H1 (cell line): ENCODE measurements at regions of chr2 and their contacts with region 1.

Region 1: DNA sequence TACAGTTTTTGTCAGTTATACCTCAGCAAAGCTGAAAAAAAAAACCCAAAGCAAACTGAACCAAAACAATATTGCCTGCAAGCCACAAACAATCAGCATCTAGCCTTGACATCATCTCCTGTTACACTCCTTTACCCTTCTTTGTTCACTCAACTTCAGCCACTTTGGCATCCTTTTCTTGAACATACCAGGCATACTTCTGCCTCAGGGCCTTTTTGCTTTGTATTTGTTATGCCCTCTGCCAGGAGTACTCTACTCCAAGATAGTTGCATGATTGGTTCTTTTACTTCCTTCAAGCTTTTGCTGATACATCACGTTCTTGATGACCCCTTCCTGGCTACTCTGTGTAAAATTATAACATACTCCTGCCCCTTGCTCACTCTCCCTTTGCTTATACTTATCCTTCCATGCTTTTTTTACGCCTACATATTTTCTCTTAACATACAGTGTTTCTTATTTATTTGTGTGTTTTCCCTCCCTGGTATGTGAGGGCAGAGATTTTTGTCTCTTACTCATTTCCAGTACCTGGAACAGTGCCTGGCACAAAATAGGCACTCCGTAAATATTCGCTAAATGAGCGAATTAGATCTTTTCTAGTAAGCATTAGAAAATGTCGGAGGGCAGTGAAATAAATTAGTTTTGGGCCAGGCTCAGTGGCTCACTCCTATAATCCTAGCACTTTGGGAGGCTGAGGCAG is 12.7 kb downstream of the ABI2 start:
- DNase-seq: no peak
- H3K4me3 ChIP-seq: no peak overlapping the region
- H3K27ac ChIP-seq: peak overlapping the region; percentile 76
- H3K4me1 ChIP-seq: peaks cover 2 to 10% (median 3%) of the 10 kb centered on the region in 4 experiments
- H3K27me3 ChIP-seq: no peaks in the 10 kb centered on the region
- CTCF ChIP-seq: no peak
- EP300 ChIP-seq: no peak
- POLR2A ChIP-seq: no peak; a peak in 1 of 3 replicates
- RAD21 ChIP-seq: no peak

Region 2: DNA sequence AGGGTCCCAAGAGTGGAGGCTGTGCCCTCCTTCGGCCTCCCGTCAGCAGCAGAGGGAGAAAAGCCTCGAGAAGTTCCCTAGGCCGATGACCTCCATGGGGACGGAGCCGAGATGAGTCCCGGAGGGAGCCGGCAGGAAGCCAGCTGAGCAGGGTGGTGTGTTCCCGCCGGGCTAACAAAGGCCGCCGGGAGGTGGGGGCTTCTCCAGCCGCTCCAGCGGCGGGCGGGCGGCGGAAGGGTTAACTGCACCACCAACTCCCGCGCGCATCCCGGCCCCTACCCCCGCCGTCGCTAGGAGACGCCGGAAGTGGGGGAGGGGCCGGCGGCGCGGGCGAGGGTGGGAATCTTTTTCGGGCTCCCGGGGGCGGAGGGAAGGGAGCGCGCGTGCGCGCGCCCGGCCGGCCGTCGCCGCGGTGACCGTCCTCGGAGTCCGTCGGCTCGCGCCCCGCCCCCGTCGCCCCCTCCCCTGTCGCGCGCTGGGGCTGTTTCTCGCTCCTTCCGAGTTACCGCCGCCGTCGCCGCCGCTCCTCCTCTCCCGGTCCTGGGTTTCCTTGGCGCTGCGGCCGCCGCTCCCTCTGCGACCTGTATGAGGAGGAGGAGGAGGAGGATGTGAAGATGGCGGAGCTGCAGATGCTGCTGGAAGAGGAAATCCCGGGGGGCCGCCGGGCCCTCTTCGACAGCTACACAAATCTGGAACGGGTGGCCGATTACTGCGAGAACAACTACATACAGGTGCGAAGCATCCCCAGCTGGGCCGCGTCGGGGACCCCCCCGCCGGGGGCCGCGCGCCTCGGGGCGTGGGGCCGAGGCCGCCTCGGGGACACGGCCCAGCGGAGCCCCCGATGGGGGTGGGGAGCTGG is 12.8 kb before region 1 on chr2 and contains the start of gene ABI2:
- CTCF ChIA-PET with region 1: interaction called, 3 read pairs
- POLR2A ChIA-PET with region 1: interaction called, 40 read pairs
- DNase-seq: peak; percentile 81 to 95
- H3K4me3 ChIP-seq: peak within 1 kb of the TSS; percentile 84 to 99 (median 92)
- H3K27ac ChIP-seq: peak within 1 kb of the TSS; percentile 97
- H3K4me1 ChIP-seq: peaks cover 0 to 2% (median 0%) of the 10 kb centered on the region in 4 experiments; a peak in 1 of 7 replicates
- H3K27me3 ChIP-seq: no peaks in the 10 kb centered on the region
- CTCF ChIP-seq: no peak
- EP300 ChIP-seq: peak in 1 of 2 experiments; percentile 56; a peak in 1 of 3 replicates
- POLR2A ChIP-seq: peak; percentile 90 to 94
- RAD21 ChIP-seq: peak in 1 of 2 experiments; percentile 5; a peak in 1 of 4 replicates
- total RNA-seq, gene ABI2: 118 and 130 TPM in 2 replicates

Region 3: DNA sequence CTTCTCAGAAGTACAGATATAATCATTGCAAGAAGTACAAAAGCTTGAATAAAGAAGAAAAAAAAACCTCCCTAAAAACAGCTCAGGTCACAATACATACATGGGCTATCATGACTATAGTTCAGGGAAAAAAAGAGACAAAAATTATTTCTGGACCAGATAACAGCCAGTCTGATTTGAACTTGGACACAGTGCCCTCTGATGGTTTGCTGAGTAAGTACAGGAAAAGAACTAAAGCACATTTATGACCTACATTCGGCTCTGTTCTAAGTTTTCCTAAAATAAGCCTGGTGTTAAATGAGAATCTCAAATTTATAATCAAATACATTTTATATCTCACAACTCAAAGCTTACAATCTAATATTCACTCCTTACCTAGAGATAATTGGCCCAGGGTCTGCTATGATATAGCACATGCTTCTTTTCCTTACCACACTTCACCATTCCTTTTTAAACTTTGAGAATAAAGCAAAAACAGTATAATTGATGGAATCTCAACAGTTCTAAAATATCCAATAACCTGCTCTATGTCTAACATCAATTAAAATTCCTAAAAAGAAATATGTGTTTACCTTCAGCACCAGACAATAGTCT is 113.0 kb after region 1 on chr2:
- CTCF ChIA-PET with region 1: no interaction called
- POLR2A ChIA-PET with region 1: no interaction called
- DNase-seq: no peak
- H3K4me3 ChIP-seq: no peak overlapping the region
- H3K27ac ChIP-seq: no peak overlapping the region
- H3K4me1 ChIP-seq: no peaks in the 10 kb centered on the region
- H3K27me3 ChIP-seq: no peaks in the 10 kb centered on the region
- CTCF ChIP-seq: peak in 2 of 3 experiments; percentile 52 to 66; a peak in 3 of 4 replicates
- EP300 ChIP-seq: no peak
- POLR2A ChIP-seq: no peak
- RAD21 ChIP-seq: peak; percentile 72 to 74

Region 4: GRCh38 chr2:203498161-203498560 is 157.2 kb after region 1 on chr2:
- CTCF ChIA-PET with region 1: no interaction called
- POLR2A ChIA-PET with region 1: no interaction called
- DNase-seq: no peak
- H3K4me3 ChIP-seq: no peak overlapping the region
- H3K27ac ChIP-seq: no peak overlapping the region
- H3K4me1 ChIP-seq: no peaks in the 10 kb centered on the region
- H3K27me3 ChIP-seq: no peaks in the 10 kb centered on the region
- CTCF ChIP-seq: no peak
- EP300 ChIP-seq: no peak
- POLR2A ChIP-seq: no peak
- RAD21 ChIP-seq: no peak